ENCODE measurements at regions of chr4 and their contacts with region 1.

Region 1: GRCh38 chr4:48546336-48546735 is 56.3 kb downstream of the ZAR1 start:
- DNase-seq: peak; percentile 34
- ATAC-seq: 0 out of 2 replicates have a peak, but pooled peaks have one; percentile 22
- H3K4me3 Mint-ChIP-seq: no peak overlapping the region
- H3K27ac Mint-ChIP-seq: no peak overlapping the region
- H3K4me1 Mint-ChIP-seq: peaks cover 17% of the 10 kb centered on the region
- H3K27me3 Mint-ChIP-seq: no peaks in the 10 kb centered on the region
- CTCF ChIP-seq: peak; percentile 57; the same call in 1 of the 2 replicates

Region 2: DNA sequence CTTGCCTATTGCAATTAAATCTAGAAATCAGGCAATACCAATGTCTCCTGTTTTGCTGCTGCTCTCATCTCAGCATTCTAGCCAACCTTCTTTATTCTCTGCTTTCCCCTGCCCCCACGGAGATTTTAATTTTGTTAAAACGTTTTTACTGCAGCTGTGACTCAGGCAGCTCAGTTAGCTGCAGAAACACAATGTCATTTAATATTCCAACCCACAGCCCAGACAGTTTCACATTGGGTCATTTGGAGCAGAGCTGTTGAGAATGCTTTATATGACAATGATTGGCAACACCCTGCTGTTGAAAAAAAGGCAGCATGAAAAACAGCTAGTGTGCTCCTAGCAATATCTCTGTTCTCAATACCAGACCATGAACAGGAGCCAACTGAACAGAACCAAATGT is 75.8 kb before region 1 on chr4:
- CTCF ChIA-PET with region 1: no interaction called
- POLR2A ChIA-PET with region 1: no interaction called
- DNase-seq: no peak
- ATAC-seq: no peak
- H3K4me3 Mint-ChIP-seq: no peak overlapping the region
- H3K27ac Mint-ChIP-seq: no peak overlapping the region
- H3K4me1 Mint-ChIP-seq: peaks cover 11% of the 10 kb centered on the region
- H3K27me3 Mint-ChIP-seq: no peaks in the 10 kb centered on the region
- CTCF ChIP-seq: no peak

Region 3: DNA sequence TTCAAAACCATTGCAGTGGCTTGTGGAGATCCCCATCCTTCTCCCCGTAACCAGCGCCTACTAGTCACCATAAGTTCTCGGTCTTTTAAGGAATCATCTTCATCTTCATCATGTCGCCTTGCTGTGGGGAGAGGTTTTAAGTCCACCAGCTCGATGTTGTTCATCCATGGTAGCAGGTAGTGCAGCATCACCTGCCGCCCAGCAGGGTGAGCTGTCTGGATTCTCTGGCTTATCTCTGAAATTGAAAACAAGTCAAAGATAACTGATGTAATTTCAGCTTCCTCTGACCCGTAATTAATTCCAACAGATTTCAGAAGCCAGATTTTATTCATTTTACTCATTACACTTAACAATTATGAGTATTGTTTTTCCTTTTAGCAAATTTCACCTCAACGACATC is 11.1 kb after region 1 on chr4:
- CTCF ChIA-PET with region 1: interaction called, 14 read pairs
- POLR2A ChIA-PET with region 1: no interaction called
- DNase-seq: peak; percentile 20
- ATAC-seq: peak; percentile 65
- H3K4me3 Mint-ChIP-seq: no peak overlapping the region
- H3K27ac Mint-ChIP-seq: no peak overlapping the region
- H3K4me1 Mint-ChIP-seq: no peaks in the 10 kb centered on the region
- H3K27me3 Mint-ChIP-seq: no peaks in the 10 kb centered on the region
- CTCF ChIP-seq: peak; percentile 21; the same call in 1 of the 2 replicates

Region 4: GRCh38 chr4:48653217-48654014 is 107.1 kb after region 1 on chr4:
- CTCF ChIA-PET with region 1: no interaction called
- POLR2A ChIA-PET with region 1: no interaction called
- DNase-seq: no peak
- ATAC-seq: peak; percentile 68
- H3K4me3 Mint-ChIP-seq: no peak overlapping the region
- H3K27ac Mint-ChIP-seq: no peak overlapping the region
- H3K4me1 Mint-ChIP-seq: peaks cover 17% of the 10 kb centered on the region
- H3K27me3 Mint-ChIP-seq: no peaks in the 10 kb centered on the region
- CTCF ChIP-seq: no peak

Measured in WTC11 (cell line).